ENCODE measurements at regions of chr9 and their contacts with region 1.

Region 1: GRCh38 chr9:78235756-78236538 is at the start of gene CEP78:
- DNase-seq: peak; percentile 93
- H3K4me3 Mint-ChIP-seq: peak within 1 kb of the TSS; percentile 93
- H3K27ac Mint-ChIP-seq: peak within 1 kb of the TSS; percentile 96
- H3K4me1 Mint-ChIP-seq: peaks cover 16% of the 10 kb centered on the region
- H3K27me3 Mint-ChIP-seq: no peaks in the 10 kb centered on the region
- CTCF ChIP-seq: no peak
- total RNA-seq, gene CEP78: 13.7 and 17.8 TPM in 2 replicates

Region 2: DNA sequence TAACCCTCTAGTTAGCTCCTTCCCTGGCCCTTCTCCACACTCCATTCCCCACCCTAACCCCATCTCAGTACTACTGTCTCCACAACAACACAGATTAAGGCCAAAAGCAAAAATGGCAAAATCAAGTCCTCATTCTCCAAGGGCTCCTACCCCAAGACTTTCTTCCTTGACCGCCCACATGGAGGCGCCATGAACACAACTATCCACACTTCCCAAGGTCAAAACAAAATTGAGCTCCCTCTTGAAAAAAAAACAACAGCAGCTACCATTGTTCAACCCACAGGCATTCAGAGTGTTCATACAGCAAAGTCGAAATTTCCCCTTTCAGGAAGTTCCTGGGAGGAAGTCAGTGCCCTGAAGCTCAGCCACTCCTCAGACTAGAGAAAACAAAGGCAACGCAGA is 258.7 kb before region 1 on chr9:
- CTCF ChIA-PET with region 1: interaction called, 4 read pairs
- POLR2A ChIA-PET with region 1: interaction called, 3 read pairs
- intact Hi-C with region 1: loop called (anchors 10 kb)
- DNase-seq: peak; percentile 78
- H3K4me3 Mint-ChIP-seq: no peak overlapping the region
- H3K27ac Mint-ChIP-seq: peak overlapping the region; percentile 43
- H3K4me1 Mint-ChIP-seq: peaks cover 35% of the 10 kb centered on the region
- H3K27me3 Mint-ChIP-seq: no peaks in the 10 kb centered on the region
- CTCF ChIP-seq: peak; percentile 42

Region 3: DNA sequence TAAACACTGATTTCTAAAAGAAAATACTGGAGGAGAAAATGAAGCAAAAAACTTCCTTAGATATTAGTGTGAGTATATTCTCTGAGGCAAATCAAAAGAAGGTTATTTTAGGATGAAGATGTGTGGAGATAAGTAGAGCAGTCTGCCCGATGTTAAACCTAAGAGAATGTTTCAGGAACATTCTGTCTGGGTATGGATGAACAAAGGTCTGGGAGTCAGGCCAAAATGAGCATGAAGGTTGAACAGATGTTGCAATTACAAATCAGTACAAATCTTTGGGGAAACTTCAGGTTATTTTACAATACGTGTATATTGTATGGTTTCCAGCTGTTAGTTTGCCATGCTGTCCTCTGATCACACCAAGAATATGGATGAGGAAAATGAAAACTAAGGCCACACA is 14.5 kb before region 1 on chr9:
- CTCF ChIA-PET with region 1: interaction called, 5 read pairs
- POLR2A ChIA-PET with region 1: interaction called, 27 read pairs
- intact Hi-C with region 1: no loop called
- DNase-seq: peak; percentile 48
- H3K4me3 Mint-ChIP-seq: no peak overlapping the region
- H3K27ac Mint-ChIP-seq: peak overlapping the region; percentile 83
- H3K4me1 Mint-ChIP-seq: peaks cover 15% of the 10 kb centered on the region
- H3K27me3 Mint-ChIP-seq: no peaks in the 10 kb centered on the region
- CTCF ChIP-seq: no peak

Region 4: DNA sequence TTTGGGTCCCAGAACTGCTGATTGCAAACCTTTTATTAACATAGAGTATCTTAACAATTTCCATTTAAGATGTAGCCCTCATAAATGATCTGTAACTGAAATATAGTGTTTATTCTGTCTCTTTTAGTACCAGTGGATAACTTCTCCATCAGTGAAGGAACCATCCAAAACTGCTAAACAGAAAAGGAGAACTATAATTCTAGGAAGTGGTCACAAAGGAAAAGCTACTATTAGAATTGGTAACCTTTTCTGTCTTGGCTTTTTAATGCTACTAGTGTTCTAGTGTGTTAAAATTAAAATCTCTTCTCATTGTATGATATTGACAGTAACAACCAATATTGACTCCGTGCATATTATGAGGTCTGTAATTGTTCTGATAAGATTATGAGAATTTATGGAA is 12.7 kb after region 1 on chr9:
- CTCF ChIA-PET with region 1: interaction called, 43 read pairs
- POLR2A ChIA-PET with region 1: interaction called, 4 read pairs
- intact Hi-C with region 1: no loop called
- DNase-seq: no peak
- H3K4me3 Mint-ChIP-seq: no peak overlapping the region
- H3K27ac Mint-ChIP-seq: no peak overlapping the region
- H3K4me1 Mint-ChIP-seq: no peaks in the 10 kb centered on the region
- H3K27me3 Mint-ChIP-seq: no peaks in the 10 kb centered on the region
- CTCF ChIP-seq: no peak

Region 5: GRCh38 chr9:78261403-78262001 is 25.6 kb after region 1 on chr9:
- CTCF ChIA-PET with region 1: interaction called, 20 read pairs
- POLR2A ChIA-PET with region 1: interaction called, 4 read pairs
- intact Hi-C with region 1: no loop called
- DNase-seq: peak; percentile 45
- H3K4me3 Mint-ChIP-seq: no peak overlapping the region
- H3K27ac Mint-ChIP-seq: no peak overlapping the region
- H3K4me1 Mint-ChIP-seq: no peaks in the 10 kb centered on the region
- H3K27me3 Mint-ChIP-seq: no peaks in the 10 kb centered on the region
- CTCF ChIP-seq: peak; percentile 61

Region 6: DNA sequence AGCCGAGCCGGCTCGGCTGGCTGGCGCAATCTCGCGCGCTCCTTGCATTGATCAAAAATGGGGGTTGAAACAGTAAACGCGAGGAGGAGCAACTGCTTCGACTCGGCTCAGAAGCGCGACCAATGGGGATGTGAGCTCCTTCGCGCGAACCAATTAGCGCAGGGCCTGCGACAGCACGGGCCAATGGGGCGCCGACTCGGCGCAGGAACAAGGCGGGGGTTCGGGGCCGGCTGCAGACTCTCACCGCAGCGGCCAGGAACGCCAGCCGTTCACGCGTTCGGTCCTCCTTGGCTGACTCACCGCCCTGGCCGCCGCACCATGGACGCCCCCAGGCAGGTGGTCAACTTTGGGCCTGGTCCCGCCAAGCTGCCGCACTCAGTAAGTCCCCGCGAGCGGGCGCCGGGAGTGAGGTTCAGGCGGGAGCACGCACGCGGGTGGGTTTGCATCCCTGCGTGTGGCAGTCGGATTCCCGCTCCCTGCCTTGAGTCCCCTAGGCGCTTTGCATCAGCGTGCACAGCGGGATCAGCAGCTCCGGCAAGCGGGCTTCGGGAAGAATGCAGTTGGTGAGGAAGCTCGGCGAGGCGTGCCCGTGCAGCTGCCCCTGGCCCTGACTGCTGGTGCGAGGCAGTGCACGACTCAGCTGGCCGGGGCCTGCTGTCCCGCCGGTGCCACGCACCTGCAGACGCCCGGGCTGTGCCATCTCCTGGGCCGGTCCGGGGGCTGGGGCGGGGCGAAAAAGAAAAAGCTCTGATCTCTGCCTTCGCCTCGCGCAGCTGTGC is 61.1 kb after region 1 on chr9 and contains the start of gene PSAT1:
- CTCF ChIA-PET with region 1: interaction called, 37 read pairs
- POLR2A ChIA-PET with region 1: interaction called, 41 read pairs
- intact Hi-C with region 1: no loop called
- DNase-seq: peak; percentile 98
- H3K4me3 Mint-ChIP-seq: peak within 1 kb of the TSS; percentile 92
- H3K27ac Mint-ChIP-seq: peak within 1 kb of the TSS; percentile 87
- H3K4me1 Mint-ChIP-seq: peaks cover 8% of the 10 kb centered on the region
- H3K27me3 Mint-ChIP-seq: no peaks in the 10 kb centered on the region
- CTCF ChIP-seq: no peak
- total RNA-seq, gene PSAT1: 263 and 326 TPM in 2 replicates

Region 7: GRCh38 chr9:78490231-78490630 is 254.3 kb after region 1 on chr9:
- CTCF ChIA-PET with region 1: no interaction called
- POLR2A ChIA-PET with region 1: no interaction called
- intact Hi-C with region 1: no loop called
- DNase-seq: no peak
- H3K4me3 Mint-ChIP-seq: no peak overlapping the region
- H3K27ac Mint-ChIP-seq: no peak overlapping the region
- H3K4me1 Mint-ChIP-seq: no peaks in the 10 kb centered on the region
- H3K27me3 Mint-ChIP-seq: peaks cover 13% of the 10 kb centered on the region
- CTCF ChIP-seq: no peak